CD4-positive, alpha-beta T cell (primary cell): ENCODE measurements at regions of chr12 and their contacts with region 1.

Region 1: DNA sequence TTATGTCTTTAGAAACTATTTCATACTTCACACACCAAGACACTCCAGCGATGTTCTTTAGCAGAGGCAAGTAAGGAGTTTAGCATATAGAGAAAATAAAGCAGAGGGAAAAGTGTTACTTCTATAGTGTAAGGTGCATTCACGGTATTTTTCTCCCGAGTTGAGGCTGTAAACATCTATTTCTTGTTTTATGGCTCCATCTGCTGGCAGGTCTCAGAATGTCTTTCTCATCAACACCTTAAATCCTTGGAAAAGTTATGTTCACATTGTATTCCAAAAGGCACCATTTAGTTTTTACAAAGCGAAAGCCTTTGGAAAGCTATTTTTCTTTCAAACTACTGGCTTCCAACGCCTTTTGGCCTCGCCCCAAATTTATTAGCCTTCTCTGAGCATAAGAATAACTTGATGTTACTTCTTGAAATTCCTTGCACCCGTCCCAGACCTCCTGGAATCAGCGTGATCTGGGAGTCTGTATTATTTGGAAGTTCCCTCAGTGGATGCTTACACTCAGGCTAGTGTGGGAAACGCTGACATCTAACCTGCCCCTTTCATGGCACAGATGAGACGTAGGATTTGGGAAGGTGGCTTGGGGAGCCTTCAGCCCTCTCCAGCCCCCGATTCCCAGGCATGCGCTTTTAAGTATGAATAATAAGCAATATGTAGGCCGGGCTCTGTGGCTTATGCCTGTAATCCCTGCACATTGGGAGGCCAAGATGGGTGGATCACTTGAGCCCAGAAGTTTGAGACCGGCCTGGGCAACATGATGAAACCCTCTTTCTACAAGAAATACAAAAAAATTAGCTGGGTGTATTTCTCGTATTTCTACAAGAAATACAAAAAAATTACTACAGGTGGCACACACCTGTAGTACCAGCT is 1.9 kb upstream of the PIWIL1 start:
- DNase-seq: peak in 4 of 14 experiments; percentile 30 to 70 (median 57)
- ATAC-seq: no peak
- H3K4me3 ChIP-seq: no peak overlapping the region
- H3K4me3 Mint-ChIP-seq: no peak overlapping the region
- H3K27ac ChIP-seq: no peak overlapping the region
- H3K27ac Mint-ChIP-seq: no peak overlapping the region
- H3K4me1 ChIP-seq: no peaks in the 10 kb centered on the region
- H3K4me1 Mint-ChIP-seq: no peaks in the 10 kb centered on the region
- H3K27me3 ChIP-seq: peaks cover 4 to 11% of the 10 kb centered on the region in 2 experiments
- H3K27me3 Mint-ChIP-seq: peaks cover 51% of the 10 kb centered on the region
- CTCF ChIP-seq: peak; percentile 75

Region 2: GRCh38 chr12:130041983-130042812 is 293.6 kb before region 1 on chr12:
- CTCF ChIA-PET with region 1: no interaction called
- POLR2A ChIA-PET with region 1: no interaction called
- intact Hi-C with region 1: loop called (anchors 1 kb)
- DNase-seq: peak in 12 of 14 experiments; percentile 10 to 55 (median 18)
- ATAC-seq: peak; percentile 34
- H3K4me3 ChIP-seq: no peak overlapping the region
- H3K4me3 Mint-ChIP-seq: no peak overlapping the region
- H3K27ac ChIP-seq: no peak overlapping the region
- H3K27ac Mint-ChIP-seq: no peak overlapping the region
- H3K4me1 ChIP-seq: no peaks in the 10 kb centered on the region
- H3K4me1 Mint-ChIP-seq: no peaks in the 10 kb centered on the region
- H3K27me3 ChIP-seq: peaks cover 21 to 41% of the 10 kb centered on the region in 2 experiments
- H3K27me3 Mint-ChIP-seq: peaks cover 68% of the 10 kb centered on the region
- CTCF ChIP-seq: peak; percentile 59

Region 3: DNA sequence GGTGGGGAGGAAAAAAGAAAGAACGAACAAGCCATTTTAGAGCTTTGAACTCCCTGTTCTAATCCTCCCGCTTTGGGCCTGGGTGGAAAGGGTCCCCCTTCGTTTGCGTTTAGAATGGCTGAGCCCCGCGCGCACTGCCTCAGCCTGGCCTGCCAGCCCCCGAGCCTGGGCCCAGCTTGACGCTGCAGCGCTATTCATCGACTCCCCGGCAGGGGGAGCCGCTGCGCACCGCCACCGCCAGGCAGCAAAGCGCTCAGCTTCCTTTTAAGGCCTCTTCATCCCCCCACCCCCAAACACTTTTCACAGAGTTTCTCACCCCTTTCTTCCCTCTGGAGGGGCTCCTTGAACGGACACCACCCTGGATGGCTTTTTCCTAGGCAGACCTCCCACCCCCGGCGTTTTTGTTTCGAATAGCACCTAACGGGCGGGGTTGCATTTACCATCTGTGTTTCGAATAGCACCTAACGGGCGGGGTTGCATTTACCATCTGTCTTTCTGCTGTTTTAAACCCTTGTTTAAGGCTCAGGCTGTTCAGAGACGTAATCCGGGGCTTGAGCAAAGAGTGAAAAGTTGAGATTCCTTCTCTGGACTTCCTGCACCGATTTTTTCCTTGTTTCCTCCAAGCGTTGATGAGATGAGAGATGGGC is 54.5 kb before region 1 on chr12:
- CTCF ChIA-PET with region 1: no interaction called
- POLR2A ChIA-PET with region 1: no interaction called
- intact Hi-C with region 1: loop called (anchors 1 kb)
- DNase-seq: peak in 9 of 14 experiments; percentile 4 to 61 (median 29)
- ATAC-seq: peak; percentile 63
- H3K4me3 ChIP-seq: no peak overlapping the region
- H3K4me3 Mint-ChIP-seq: peak overlapping the region; percentile 58
- H3K27ac ChIP-seq: no peak overlapping the region
- H3K27ac Mint-ChIP-seq: no peak overlapping the region
- H3K4me1 ChIP-seq: no peaks in the 10 kb centered on the region
- H3K4me1 Mint-ChIP-seq: peaks cover 4% of the 10 kb centered on the region
- H3K27me3 ChIP-seq: peaks cover 0 to 2% of the 10 kb centered on the region in 2 experiments
- H3K27me3 Mint-ChIP-seq: peaks cover 14% of the 10 kb centered on the region
- CTCF ChIP-seq: peak; percentile 76

Region 4: DNA sequence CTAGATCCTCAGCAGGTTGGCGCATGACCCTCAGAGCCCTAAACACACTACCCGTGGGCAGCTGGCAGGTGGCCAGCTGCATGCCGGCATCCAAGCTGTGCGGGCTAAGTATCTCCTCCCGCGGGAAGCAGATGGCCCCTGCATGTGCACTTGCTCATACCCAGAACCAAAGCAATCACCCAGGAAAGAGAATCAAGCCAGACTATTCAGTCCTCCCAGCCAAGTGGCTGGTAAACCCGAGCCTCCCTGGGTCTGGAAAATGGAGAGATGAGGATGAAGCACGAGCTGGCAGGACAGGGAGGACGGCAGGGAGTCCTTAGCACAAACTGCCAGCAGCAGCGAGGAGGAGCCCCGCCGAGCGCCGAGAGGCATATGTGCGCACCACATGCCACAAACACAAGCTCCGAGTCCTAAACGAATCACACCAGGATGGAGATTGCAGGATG is 240.6 kb after region 1 on chr12:
- CTCF ChIA-PET with region 1: no interaction called
- POLR2A ChIA-PET with region 1: no interaction called
- intact Hi-C with region 1: no loop called
- DNase-seq: no peak
- ATAC-seq: no peak
- H3K4me3 ChIP-seq: no peak overlapping the region
- H3K4me3 Mint-ChIP-seq: no peak overlapping the region
- H3K27ac ChIP-seq: no peak overlapping the region
- H3K27ac Mint-ChIP-seq: no peak overlapping the region
- H3K4me1 ChIP-seq: no peaks in the 10 kb centered on the region
- H3K4me1 Mint-ChIP-seq: no peaks in the 10 kb centered on the region
- H3K27me3 ChIP-seq: no peaks in the 10 kb centered on the region
- H3K27me3 Mint-ChIP-seq: no peaks in the 10 kb centered on the region
- CTCF ChIP-seq: no peak